ENCODE measurements at regions of chr1 and their contacts with region 1.

Region 1: DNA sequence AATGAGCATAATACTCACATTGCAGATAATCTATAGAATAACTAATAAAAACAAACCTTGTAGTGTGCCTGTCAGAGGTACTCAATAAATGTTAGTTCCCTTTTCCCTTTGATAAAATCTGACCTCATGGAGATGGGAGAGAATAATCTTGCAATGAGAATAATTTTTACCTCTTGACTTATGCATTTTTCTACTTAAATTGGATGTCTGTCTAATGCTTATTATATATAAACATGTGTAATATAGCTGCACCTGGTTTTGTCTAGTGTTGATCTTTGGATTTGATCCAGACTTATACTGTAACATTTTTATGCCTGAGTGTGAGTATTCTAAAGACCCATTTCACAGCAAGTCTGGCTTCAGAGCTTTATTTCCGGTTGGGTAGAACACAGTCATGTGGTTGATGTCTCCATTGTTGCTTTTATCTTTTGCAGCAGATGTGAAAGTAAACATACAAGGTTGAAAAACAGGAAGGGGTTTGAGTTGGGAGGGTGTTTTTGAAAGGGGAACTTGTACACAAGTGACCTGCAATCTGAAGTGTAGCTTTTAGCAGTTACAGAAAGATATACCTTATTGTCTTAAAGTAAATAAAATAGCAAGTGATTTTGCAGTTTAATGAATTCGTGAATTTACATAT is 12.4 kb downstream of the EPB41 start:
- DNase-seq: peak in 28 of 35 experiments; percentile 5 to 88 (median 31)
- ATAC-seq: peak; percentile 84 to 95 (median 92)
- H3K4me3 ChIP-seq: peak overlapping the region in 1 of 2 donors; percentile 18
- H3K4me3 Mint-ChIP-seq: peak overlapping the region; percentile 59 to 70 (median 65)
- H3K27ac ChIP-seq: peak overlapping the region; percentile 85
- H3K27ac Mint-ChIP-seq: peak overlapping the region; percentile 89 to 90
- H3K4me1 ChIP-seq: peaks cover 54 to 71% of the 10 kb centered on the region in 2 experiments
- H3K4me1 Mint-ChIP-seq: peaks cover 71 to 78% (median 72%) of the 10 kb centered on the region in 3 donors
- H3K27me3 ChIP-seq: no peaks in the 10 kb centered on the region
- H3K27me3 Mint-ChIP-seq: no peaks in the 10 kb centered on the region

Region 2: DNA sequence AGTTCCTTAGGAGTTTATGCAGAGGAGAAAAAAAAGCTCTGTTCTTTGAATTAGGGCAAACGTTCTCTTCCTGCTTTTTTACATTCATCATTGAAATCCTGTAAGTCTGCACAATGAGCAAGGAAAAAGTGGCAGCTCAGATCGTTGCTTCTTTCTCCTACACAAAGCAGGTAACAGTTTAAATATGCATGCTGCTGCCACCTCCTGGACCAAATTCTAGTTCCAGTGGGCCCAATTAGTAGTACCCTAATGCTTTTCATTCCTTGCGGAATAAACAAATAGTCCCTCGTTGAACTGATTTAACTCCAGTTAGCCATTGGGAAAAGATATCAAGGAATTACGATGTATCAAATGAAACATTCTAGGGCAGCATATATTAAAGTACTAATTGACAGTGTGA is 169.9 kb before region 1 on chr1:
- CTCF ChIA-PET with region 1: interaction called in 1 of 2 experiments, 10 read pairs
- POLR2A ChIA-PET with region 1: no interaction called
- DNase-seq: peak in 2 of 35 experiments; percentile 10 to 38
- ATAC-seq: peak in 2 of 4 experiments; percentile 46 to 50
- H3K4me3 ChIP-seq: no peak overlapping the region
- H3K4me3 Mint-ChIP-seq: no peak overlapping the region
- H3K27ac ChIP-seq: no peak overlapping the region
- H3K27ac Mint-ChIP-seq: peak overlapping the region in 1 of 2 donors; percentile 77
- H3K4me1 ChIP-seq: peaks cover 14 to 40% of the 10 kb centered on the region in 2 experiments
- H3K4me1 Mint-ChIP-seq: peaks cover 36 to 38% (median 37%) of the 10 kb centered on the region in 3 donors
- H3K27me3 ChIP-seq: no peaks in the 10 kb centered on the region
- H3K27me3 Mint-ChIP-seq: no peaks in the 10 kb centered on the region